ENCODE measurements at regions of chr16 and their contacts with region 1.

Region 1: GRCh38 chr16:15643048-15643945 is at the start of gene MARF1:
- DNase-seq: peak; percentile 99 to 100 (median 99)
- H3K4me3 ChIP-seq: peak within 1 kb of the TSS; percentile 94
- H3K4me3 Mint-ChIP-seq: peak within 1 kb of the TSS; percentile 82 to 99 (median 95)
- H3K27ac ChIP-seq: peak within 1 kb of the TSS; percentile 100
- H3K27ac Mint-ChIP-seq: peak within 1 kb of the TSS; percentile 97 to 100 (median 99)
- H3K4me1 ChIP-seq: peaks cover 46% of the 10 kb centered on the region
- H3K4me1 Mint-ChIP-seq: peaks cover 39 to 49% (median 46%) of the 10 kb centered on the region in 3 donors
- H3K27me3 ChIP-seq: no peaks in the 10 kb centered on the region
- H3K27me3 Mint-ChIP-seq: no peaks in the 10 kb centered on the region
- total RNA-seq, gene MARF1: 69.0 to 75.3 TPM

Region 2: DNA sequence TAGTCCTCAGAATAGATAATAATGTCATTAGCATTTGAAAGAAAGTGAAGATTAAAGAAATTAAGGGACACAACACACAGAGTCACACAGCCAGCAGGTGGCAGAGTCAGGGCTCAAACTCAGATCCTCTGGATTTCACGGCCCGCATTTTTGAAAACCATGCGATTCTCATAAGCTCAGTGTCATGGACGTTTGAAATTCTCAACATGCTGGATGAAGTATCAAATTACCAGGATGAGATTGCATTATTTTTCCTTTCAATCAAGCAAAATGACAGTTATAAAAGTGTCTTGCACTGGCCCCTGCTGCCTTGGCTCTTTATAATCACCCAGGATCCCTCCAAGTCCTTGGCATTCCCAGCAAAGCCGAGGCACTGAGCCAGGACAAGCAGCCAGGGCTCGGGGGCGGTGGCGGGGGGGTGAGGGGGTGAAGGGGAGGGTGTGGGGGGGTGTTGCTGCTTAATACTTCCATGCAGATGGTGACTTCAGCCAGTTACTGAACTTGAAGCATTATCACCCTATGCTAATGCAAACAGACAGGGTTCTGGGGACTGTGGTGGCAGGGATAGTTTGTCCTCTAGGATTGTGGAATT is 215.6 kb before region 1 on chr16:
- CTCF ChIA-PET with region 1: interaction called, 11 read pairs
- POLR2A ChIA-PET with region 1: no interaction called
- DNase-seq: peak; percentile 18 to 70 (median 24)
- H3K4me3 ChIP-seq: no peak overlapping the region
- H3K4me3 Mint-ChIP-seq: no peak overlapping the region
- H3K27ac ChIP-seq: no peak overlapping the region
- H3K27ac Mint-ChIP-seq: peak overlapping the region in 2 of 8 donors; percentile 17 to 60
- H3K4me1 ChIP-seq: no peaks in the 10 kb centered on the region
- H3K4me1 Mint-ChIP-seq: peaks cover 0 to 3% (median 2%) of the 10 kb centered on the region in 3 donors
- H3K27me3 ChIP-seq: no peaks in the 10 kb centered on the region
- H3K27me3 Mint-ChIP-seq: peaks cover 7 to 16% of the 10 kb centered on the region in 2 donors

Region 3: DNA sequence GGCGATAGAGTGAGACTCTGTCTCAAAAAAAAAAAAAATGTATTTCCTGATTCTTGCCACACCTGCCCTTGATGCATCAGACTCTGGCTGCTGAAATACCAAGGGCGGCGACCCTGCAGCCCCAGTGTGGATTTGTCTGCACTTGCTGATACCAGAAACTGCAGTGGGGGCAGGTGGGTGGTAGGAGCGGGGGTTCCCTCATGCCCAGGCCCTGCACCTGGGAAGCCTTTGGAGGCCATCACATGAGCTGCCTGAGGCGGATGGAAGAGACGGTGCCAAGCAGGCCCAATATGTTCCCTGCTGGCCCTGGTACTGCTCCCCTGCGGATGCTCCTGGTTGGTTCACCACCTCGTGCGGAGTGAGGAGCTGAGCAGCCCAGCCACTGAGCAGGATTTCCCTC is 51.0 kb before region 1 on chr16:
- CTCF ChIA-PET with region 1: interaction called, 7 read pairs
- POLR2A ChIA-PET with region 1: interaction called, 16 read pairs
- DNase-seq: peak in 3 of 5 donors; percentile 4 to 18 (median 5)
- H3K4me3 ChIP-seq: no peak overlapping the region
- H3K4me3 Mint-ChIP-seq: peak overlapping the region in 5 of 7 donors; percentile 15 to 65 (median 33)
- H3K27ac ChIP-seq: no peak overlapping the region
- H3K27ac Mint-ChIP-seq: peak overlapping the region; percentile 66 to 96 (median 84)
- H3K4me1 ChIP-seq: peaks cover 28% of the 10 kb centered on the region
- H3K4me1 Mint-ChIP-seq: peaks cover 44 to 55% (median 45%) of the 10 kb centered on the region in 3 donors
- H3K27me3 ChIP-seq: no peaks in the 10 kb centered on the region
- H3K27me3 Mint-ChIP-seq: no peaks in the 10 kb centered on the region

Region 4: GRCh38 chr16:15618392-15618791 is 24.9 kb before region 1 on chr16:
- CTCF ChIA-PET with region 1: interaction called, 12 read pairs
- POLR2A ChIA-PET with region 1: no interaction called
- DNase-seq: no peak
- H3K4me3 ChIP-seq: no peak overlapping the region
- H3K4me3 Mint-ChIP-seq: no peak overlapping the region
- H3K27ac ChIP-seq: no peak overlapping the region
- H3K27ac Mint-ChIP-seq: peak overlapping the region in 5 of 8 donors; percentile 24 to 74 (median 34)
- H3K4me1 ChIP-seq: no peaks in the 10 kb centered on the region
- H3K4me1 Mint-ChIP-seq: no peaks in the 10 kb centered on the region
- H3K27me3 ChIP-seq: no peaks in the 10 kb centered on the region
- H3K27me3 Mint-ChIP-seq: no peaks in the 10 kb centered on the region

Region 5: DNA sequence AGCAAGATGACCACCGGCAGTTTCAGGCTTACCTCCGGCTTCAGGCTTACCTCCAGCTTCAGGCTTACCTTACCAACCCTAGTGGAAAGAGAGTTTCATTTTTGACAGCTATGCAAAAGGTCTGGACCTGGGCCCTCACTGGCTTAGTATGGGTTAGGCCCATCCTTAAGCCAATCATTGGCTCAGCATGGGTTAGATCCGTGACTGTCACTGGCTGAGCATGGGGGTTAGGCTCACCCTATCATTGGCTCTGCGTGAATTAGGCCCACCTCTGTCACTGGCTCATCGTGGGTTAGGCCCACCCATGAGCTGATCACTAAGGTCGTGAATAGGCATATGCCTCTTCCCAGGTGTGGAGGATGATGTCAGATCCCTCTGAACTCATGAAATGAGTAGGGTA is 14.9 kb after region 1 on chr16:
- CTCF ChIA-PET with region 1: interaction called, 18 read pairs
- POLR2A ChIA-PET with region 1: interaction called, 12 read pairs
- DNase-seq: no peak
- H3K4me3 ChIP-seq: no peak overlapping the region
- H3K4me3 Mint-ChIP-seq: no peak overlapping the region
- H3K27ac ChIP-seq: no peak overlapping the region
- H3K27ac Mint-ChIP-seq: peak overlapping the region; percentile 57 to 98 (median 79)
- H3K4me1 ChIP-seq: peaks cover 28% of the 10 kb centered on the region
- H3K4me1 Mint-ChIP-seq: peaks cover 45 to 77% (median 69%) of the 10 kb centered on the region in 3 donors
- H3K27me3 ChIP-seq: no peaks in the 10 kb centered on the region
- H3K27me3 Mint-ChIP-seq: no peaks in the 10 kb centered on the region

Region 6: DNA sequence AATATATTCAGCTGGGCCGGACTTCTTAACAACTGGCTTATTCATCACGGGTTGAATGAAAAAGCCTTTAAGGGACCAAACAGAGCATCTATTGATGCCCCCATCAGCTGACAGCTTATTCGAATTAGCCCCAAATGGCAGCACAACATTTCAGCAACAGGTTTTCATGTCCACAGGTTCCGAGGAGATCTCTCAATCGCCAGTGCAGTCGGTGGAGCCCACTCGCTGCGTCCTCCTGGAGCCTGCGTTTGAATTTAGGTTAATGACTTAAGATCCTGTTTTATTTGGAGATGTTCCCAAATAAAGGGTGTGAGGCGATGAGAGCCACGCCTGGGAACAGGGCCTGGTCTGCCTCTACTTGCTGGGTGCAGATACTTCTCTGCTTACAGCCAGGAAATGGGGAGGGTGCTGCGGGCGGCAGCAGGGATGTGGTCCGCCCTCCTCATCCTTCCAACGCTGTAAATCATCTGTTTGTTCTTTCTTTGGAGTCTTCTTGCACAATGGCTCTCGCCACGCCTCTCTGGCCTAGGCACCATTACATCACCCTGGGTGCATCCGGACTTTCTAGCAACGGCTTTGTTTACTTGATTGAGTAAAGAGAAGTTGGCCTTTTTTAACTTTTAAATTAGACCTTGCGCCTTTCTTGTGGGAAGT is 29.3 kb after region 1 on chr16:
- CTCF ChIA-PET with region 1: interaction called, 5 read pairs
- POLR2A ChIA-PET with region 1: interaction called, 12 read pairs
- DNase-seq: peak; percentile 38 to 89 (median 79)
- H3K4me3 ChIP-seq: peak overlapping the region; percentile 41
- H3K4me3 Mint-ChIP-seq: peak overlapping the region in 6 of 7 donors; percentile 38 to 77 (median 62)
- H3K27ac ChIP-seq: peak overlapping the region; percentile 54
- H3K27ac Mint-ChIP-seq: peak overlapping the region; percentile 88 to 99 (median 96)
- H3K4me1 ChIP-seq: peaks cover 26% of the 10 kb centered on the region
- H3K4me1 Mint-ChIP-seq: peaks cover 30 to 50% (median 44%) of the 10 kb centered on the region in 3 donors
- H3K27me3 ChIP-seq: no peaks in the 10 kb centered on the region
- H3K27me3 Mint-ChIP-seq: no peaks in the 10 kb centered on the region

Measured in CD8-positive, alpha-beta memory T cell (primary cell).